Naive thymus-derived CD4-positive, alpha-beta T cell (primary cell): ENCODE measurements at regions of chr1 and their contacts with region 1.

Region 1: DNA sequence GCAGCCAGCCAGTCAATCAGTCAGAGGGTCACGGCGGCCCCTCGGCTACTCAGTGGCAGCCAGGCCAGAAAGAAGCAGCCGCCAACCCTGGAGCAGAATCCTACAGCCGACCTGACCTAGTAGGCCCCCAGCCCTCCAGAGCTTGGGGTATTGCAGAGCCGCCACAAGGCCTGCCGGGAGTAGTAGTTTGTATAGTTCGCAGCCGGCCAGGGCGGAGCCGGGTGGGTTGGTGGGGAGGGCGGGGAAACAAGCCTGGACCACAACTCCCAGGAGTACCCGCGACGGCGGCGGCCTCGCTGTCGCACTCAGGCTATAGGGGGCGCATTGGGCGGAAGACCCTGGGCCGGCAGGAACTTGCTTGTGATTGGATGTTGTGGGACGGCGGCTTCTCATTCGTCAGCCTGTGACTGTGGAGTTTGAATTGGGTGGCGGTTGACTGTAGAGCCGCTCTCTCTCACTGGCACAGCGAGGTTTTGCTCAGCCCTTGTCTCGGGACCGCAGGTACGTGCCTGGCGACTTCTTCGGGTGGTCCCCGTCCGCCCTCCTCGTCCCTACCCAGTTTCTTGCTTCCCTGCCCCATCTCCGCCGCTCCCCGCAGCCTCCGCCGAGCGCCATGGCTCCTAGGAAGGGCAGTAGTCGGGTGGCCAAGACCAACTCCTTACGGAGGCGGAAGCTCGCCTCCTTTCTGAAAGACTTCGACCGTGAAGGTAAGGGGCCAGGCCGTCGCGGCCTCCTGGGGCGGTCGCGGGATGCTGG is at the start of gene CDCA8:
- DNase-seq: peak; percentile 92 to 99 (median 97)
- ATAC-seq: peak; percentile 94
- H3K4me3 ChIP-seq: peak within 1 kb of the TSS; percentile 61
- H3K4me3 Mint-ChIP-seq: peak within 1 kb of the TSS; percentile 88 to 98 (median 96)
- H3K27ac ChIP-seq: peak within 1 kb of the TSS; percentile 77
- H3K27ac Mint-ChIP-seq: peak within 1 kb of the TSS; percentile 81 to 95 (median 88)
- H3K4me1 ChIP-seq: peaks cover 11 to 23% of the 10 kb centered on the region in 2 donors
- H3K4me1 Mint-ChIP-seq: peaks cover 23 to 54% (median 39%) of the 10 kb centered on the region in 7 donors
- H3K27me3 ChIP-seq: no peaks in the 10 kb centered on the region
- H3K27me3 Mint-ChIP-seq: peaks cover 0 to 3% (median 0%) of the 10 kb centered on the region in 5 donors
- total RNA-seq, gene CDCA8: 0.58 to 45.5 (median 0.92) TPM

Region 2: GRCh38 chr1:36088575-36089443 is 1603.4 kb before region 1 on chr1 and contains the start of gene ADPRS:
- CTCF ChIA-PET with region 1: no interaction called
- POLR2A ChIA-PET with region 1: no interaction called
- intact Hi-C with region 1: loop called (anchors 2 to 5 kb)
- DNase-seq: peak; percentile 81 to 95 (median 88)
- ATAC-seq: peak; percentile 98
- H3K4me3 ChIP-seq: peak within 1 kb of the TSS; percentile 47
- H3K4me3 Mint-ChIP-seq: peak within 1 kb of the TSS; percentile 83 to 96 (median 93)
- H3K27ac ChIP-seq: peak within 1 kb of the TSS; percentile 98
- H3K27ac Mint-ChIP-seq: peak within 1 kb of the TSS; percentile 86 to 97 (median 90)
- H3K4me1 ChIP-seq: peaks cover 11 to 16% of the 10 kb centered on the region in 2 donors
- H3K4me1 Mint-ChIP-seq: peaks cover 12 to 30% (median 23%) of the 10 kb centered on the region in 7 donors
- H3K27me3 ChIP-seq: peaks cover 0 to 5% of the 10 kb centered on the region in 2 donors
- H3K27me3 Mint-ChIP-seq: peaks cover 10 to 18% (median 10%) of the 10 kb centered on the region in 5 donors
- total RNA-seq, gene ADPRS: 18.0 to 30.2 (median 24.2) TPM

Region 3: GRCh38 chr1:37474046-37474759 is 218.1 kb before region 1 on chr1 and contains the start of gene ZC3H12A:
- CTCF ChIA-PET with region 1: no interaction called
- POLR2A ChIA-PET with region 1: interaction called, 19 read pairs
- intact Hi-C with region 1: loop called (anchors 1 kb)
- DNase-seq: peak; percentile 87 to 98 (median 93)
- ATAC-seq: peak; percentile 82
- H3K4me3 ChIP-seq: peak within 1 kb of the TSS; percentile 97
- H3K4me3 Mint-ChIP-seq: peak within 1 kb of the TSS; percentile 91 to 99 (median 96)
- H3K27ac ChIP-seq: peak within 1 kb of the TSS; percentile 95
- H3K27ac Mint-ChIP-seq: peak within 1 kb of the TSS; percentile 93 to 99 (median 98)
- H3K4me1 ChIP-seq: peaks cover 28 to 33% of the 10 kb centered on the region in 2 donors
- H3K4me1 Mint-ChIP-seq: peaks cover 43 to 59% (median 54%) of the 10 kb centered on the region in 7 donors
- H3K27me3 ChIP-seq: no peaks in the 10 kb centered on the region
- H3K27me3 Mint-ChIP-seq: no peaks in the 10 kb centered on the region
- total RNA-seq, gene ZC3H12A: 35.0 to 122 (median 46.7) TPM

Region 4: GRCh38 chr1:37553927-37554808 is 138.1 kb before region 1 on chr1 and contains the start of gene SNIP1:
- CTCF ChIA-PET with region 1: no interaction called
- POLR2A ChIA-PET with region 1: interaction called, 14 read pairs
- intact Hi-C with region 1: loop called (anchors 1 kb)
- DNase-seq: peak; percentile 67 to 94 (median 92)
- ATAC-seq: peak; percentile 99
- H3K4me3 ChIP-seq: peak within 1 kb of the TSS; percentile 92
- H3K4me3 Mint-ChIP-seq: peak within 1 kb of the TSS; percentile 97 to 100 (median 99)
- H3K27ac ChIP-seq: peak within 1 kb of the TSS; percentile 94
- H3K27ac Mint-ChIP-seq: peak within 1 kb of the TSS; percentile 91 to 99 (median 98)
- H3K4me1 ChIP-seq: peaks cover 10 to 24% of the 10 kb centered on the region in 2 donors
- H3K4me1 Mint-ChIP-seq: peaks cover 23 to 51% (median 45%) of the 10 kb centered on the region in 7 donors
- H3K27me3 ChIP-seq: no peaks in the 10 kb centered on the region
- H3K27me3 Mint-ChIP-seq: peaks cover 0 to 6% (median 0%) of the 10 kb centered on the region in 5 donors
- total RNA-seq, gene SNIP1: 27.8 to 53.6 (median 36.7) TPM

Region 5: DNA sequence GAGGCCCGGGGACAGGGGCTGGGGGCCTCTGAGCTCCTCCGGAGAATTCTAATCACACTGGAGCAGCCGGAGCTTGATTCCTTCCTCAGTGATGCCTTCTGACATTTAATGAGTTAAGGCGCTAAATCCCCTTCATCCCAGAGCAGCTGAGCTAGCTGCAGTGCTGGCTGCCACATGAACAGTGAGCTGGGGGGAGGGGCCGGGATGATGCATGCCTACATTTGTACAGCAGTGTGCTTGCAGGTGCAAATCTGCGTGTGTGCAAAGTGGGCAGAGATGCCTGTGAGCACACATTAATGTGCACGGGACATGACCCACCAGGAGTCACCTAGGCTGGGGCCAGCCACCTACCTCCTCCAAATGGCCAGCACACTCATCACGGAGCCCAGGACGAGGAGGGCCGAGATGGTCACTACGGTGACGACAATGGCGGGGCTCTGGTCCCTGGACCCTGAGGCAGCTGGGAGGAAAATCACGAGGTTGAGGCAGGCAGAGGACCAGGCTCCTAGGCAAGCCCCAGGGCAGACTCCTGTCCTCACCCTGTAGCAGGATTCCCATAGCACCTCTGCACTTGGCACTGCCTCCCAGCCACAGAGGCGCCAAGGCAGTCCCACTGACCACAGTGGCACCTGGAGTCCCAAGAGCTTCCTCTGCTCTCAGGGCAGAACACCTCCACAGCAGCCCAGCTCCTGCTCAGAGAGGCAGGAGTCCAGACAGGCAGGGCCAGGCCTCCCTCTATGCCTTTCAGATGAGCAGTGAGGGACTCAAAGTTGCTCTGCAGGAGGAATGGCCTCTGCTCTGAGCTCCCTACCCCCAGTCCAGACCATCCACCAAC is 34.7 kb after region 1 on chr1:
- CTCF ChIA-PET with region 1: no interaction called
- POLR2A ChIA-PET with region 1: no interaction called
- intact Hi-C with region 1: no loop called
- DNase-seq: no peak
- ATAC-seq: no peak
- H3K4me3 ChIP-seq: no peak overlapping the region
- H3K4me3 Mint-ChIP-seq: no peak overlapping the region
- H3K27ac ChIP-seq: no peak overlapping the region
- H3K27ac Mint-ChIP-seq: no peak overlapping the region
- H3K4me1 ChIP-seq: no peaks in the 10 kb centered on the region
- H3K4me1 Mint-ChIP-seq: no peaks in the 10 kb centered on the region
- H3K27me3 ChIP-seq: no peaks in the 10 kb centered on the region
- H3K27me3 Mint-ChIP-seq: peaks cover 16 to 41% (median 29%) of the 10 kb centered on the region in 5 donors

Region 6: GRCh38 chr1:37859507-37860345 is 167.5 kb after region 1 on chr1 and contains the start of gene MTF1:
- CTCF ChIA-PET with region 1: no interaction called
- POLR2A ChIA-PET with region 1: interaction called, 4 read pairs
- intact Hi-C with region 1: loop called (anchors 1 kb)
- DNase-seq: peak; percentile 85 to 98 (median 97)
- ATAC-seq: peak; percentile 99
- H3K4me3 ChIP-seq: peak within 1 kb of the TSS; percentile 94
- H3K4me3 Mint-ChIP-seq: peak within 1 kb of the TSS; percentile 89 to 100 (median 96)
- H3K27ac ChIP-seq: peak within 1 kb of the TSS; percentile 89
- H3K27ac Mint-ChIP-seq: peak within 1 kb of the TSS; percentile 90 to 99 (median 95)
- H3K4me1 ChIP-seq: peaks cover 12 to 19% of the 10 kb centered on the region in 2 donors
- H3K4me1 Mint-ChIP-seq: peaks cover 26 to 39% (median 33%) of the 10 kb centered on the region in 7 donors
- H3K27me3 ChIP-seq: no peaks in the 10 kb centered on the region
- H3K27me3 Mint-ChIP-seq: no peaks in the 10 kb centered on the region
- total RNA-seq, gene MTF1: 22.9 to 45.2 (median 27.1) TPM

Region 7: DNA sequence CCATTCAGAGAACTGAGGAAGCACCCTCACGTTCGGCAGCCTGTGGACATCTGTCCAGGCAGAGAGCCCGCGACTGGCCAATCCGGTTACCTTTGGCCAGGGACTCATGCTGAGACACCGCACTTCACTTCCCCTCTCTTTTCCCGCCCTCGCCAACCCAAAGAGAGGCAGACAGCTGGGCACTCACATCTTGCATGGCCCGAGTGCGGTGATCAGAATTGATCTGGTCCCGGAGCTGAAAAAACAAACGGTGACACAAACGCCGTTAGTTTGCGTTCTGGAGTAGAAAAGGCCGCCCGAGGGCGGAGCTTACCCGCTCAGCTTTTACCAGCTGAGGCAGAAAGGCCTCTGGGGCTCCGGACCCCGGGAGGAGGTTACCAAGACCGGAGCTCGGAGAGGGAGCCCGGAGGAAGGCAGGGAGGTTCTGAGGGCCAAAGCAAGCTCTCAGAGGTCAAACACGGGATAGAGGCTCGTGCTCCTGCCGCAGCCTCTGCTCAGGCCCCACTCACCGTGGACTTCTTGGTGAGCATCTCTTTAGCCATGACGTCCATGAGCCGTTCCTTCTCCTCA is 297.2 kb after region 1 on chr1:
- CTCF ChIA-PET with region 1: no interaction called
- POLR2A ChIA-PET with region 1: no interaction called
- intact Hi-C with region 1: loop called in 1 of 2 experiments (anchors 1 kb)
- DNase-seq: peak in 2 of 9 donors; percentile 46 to 47
- ATAC-seq: peak; percentile 33
- H3K4me3 ChIP-seq: peak overlapping the region; percentile 97
- H3K4me3 Mint-ChIP-seq: peak overlapping the region; percentile 89 to 100 (median 99)
- H3K27ac ChIP-seq: peak overlapping the region; percentile 79
- H3K27ac Mint-ChIP-seq: peak overlapping the region; percentile 87 to 99 (median 91)
- H3K4me1 ChIP-seq: peaks cover 13 to 17% of the 10 kb centered on the region in 2 donors
- H3K4me1 Mint-ChIP-seq: peaks cover 16 to 30% (median 24%) of the 10 kb centered on the region in 7 donors
- H3K27me3 ChIP-seq: no peaks in the 10 kb centered on the region
- H3K27me3 Mint-ChIP-seq: no peaks in the 10 kb centered on the region

Region 8: DNA sequence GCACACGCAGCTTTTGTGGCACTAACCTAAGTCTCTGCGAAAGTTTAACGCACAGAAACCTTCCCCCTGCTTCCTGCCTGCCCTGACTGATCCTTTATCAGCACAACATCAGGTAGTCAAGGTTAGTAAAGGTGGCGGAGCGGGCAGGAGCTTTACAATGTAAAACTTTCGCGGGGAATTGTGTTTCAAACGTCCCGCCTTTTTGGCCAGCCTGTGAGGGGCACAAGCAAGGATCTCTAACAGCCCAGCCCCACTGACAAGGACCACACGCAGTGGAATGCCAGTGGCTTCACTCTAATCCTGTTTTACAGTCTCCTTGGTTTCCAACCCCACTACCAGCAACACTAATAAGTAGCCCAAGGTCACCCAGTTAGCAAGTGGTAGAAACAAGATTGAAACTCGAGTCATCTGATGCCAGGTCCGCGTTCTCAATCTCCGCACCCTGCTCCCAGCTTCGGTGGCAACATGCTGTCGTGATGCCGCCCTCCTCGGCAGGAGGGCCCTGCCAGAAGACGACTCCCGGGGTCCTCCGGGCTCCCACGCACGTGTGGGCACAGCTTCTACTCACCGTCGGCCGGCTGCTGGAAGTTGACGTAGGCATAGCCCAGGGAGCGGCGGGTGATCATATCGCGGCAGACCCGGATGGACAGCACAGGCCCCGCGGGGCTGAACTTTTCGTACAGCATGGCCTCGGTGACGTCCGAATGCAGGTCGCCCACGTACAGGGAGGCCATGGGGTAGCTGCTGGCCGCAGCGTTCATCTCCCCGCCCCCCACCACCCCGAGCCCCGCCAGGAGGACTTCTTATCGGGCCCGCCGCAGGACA is 1883.1 kb after region 1 on chr1:
- CTCF ChIA-PET with region 1: no interaction called
- POLR2A ChIA-PET with region 1: no interaction called
- intact Hi-C with region 1: loop called in 1 of 2 experiments (anchors 5 kb)
- DNase-seq: peak; percentile 25 to 72 (median 57)
- ATAC-seq: peak; percentile 45
- H3K4me3 ChIP-seq: peak overlapping the region; percentile 68
- H3K4me3 Mint-ChIP-seq: peak overlapping the region; percentile 86 to 98 (median 91)
- H3K27ac ChIP-seq: peak overlapping the region; percentile 89
- H3K27ac Mint-ChIP-seq: peak overlapping the region; percentile 79 to 96 (median 93)
- H3K4me1 ChIP-seq: peaks cover 18 to 26% of the 10 kb centered on the region in 2 donors
- H3K4me1 Mint-ChIP-seq: peaks cover 19 to 52% (median 49%) of the 10 kb centered on the region in 7 donors
- H3K27me3 ChIP-seq: no peaks in the 10 kb centered on the region
- H3K27me3 Mint-ChIP-seq: no peaks in the 10 kb centered on the region